WTC11 (cell line): ENCODE measurements at regions of chr1 and their contacts with region 1.

Region 1: GRCh38 chr1:5745776-5746610 is 246.2 kb downstream of the NPHP4 start:
- DNase-seq: peak; percentile 86
- ATAC-seq: peak; percentile 96
- H3K4me3 Mint-ChIP-seq: no peak overlapping the region
- H3K27ac Mint-ChIP-seq: no peak overlapping the region
- H3K4me1 Mint-ChIP-seq: peaks cover 21% of the 10 kb centered on the region
- H3K27me3 Mint-ChIP-seq: no peaks in the 10 kb centered on the region; the same call in 1 of the 2 replicates
- CTCF ChIP-seq: peak; percentile 95

Region 2: GRCh38 chr1:5514519-5515183 is 231.3 kb before region 1 on chr1:
- CTCF ChIA-PET with region 1: interaction called, 41 read pairs
- POLR2A ChIA-PET with region 1: no interaction called
- DNase-seq: peak; percentile 78
- ATAC-seq: peak; percentile 71
- H3K4me3 Mint-ChIP-seq: no peak overlapping the region
- H3K27ac Mint-ChIP-seq: no peak overlapping the region
- H3K4me1 Mint-ChIP-seq: no peaks in the 10 kb centered on the region
- H3K27me3 Mint-ChIP-seq: peaks cover 7% of the 10 kb centered on the region; the same call in 1 of the 2 replicates
- CTCF ChIP-seq: peak; percentile 99

Region 3: GRCh38 chr1:5718831-5719632 is 27.0 kb before region 1 on chr1:
- CTCF ChIA-PET with region 1: interaction called, 56 read pairs
- POLR2A ChIA-PET with region 1: no interaction called
- DNase-seq: peak; percentile 37
- ATAC-seq: peak; percentile 47
- H3K4me3 Mint-ChIP-seq: no peak overlapping the region
- H3K27ac Mint-ChIP-seq: no peak overlapping the region; the same call in 1 of the 2 replicates
- H3K4me1 Mint-ChIP-seq: peaks cover 30% of the 10 kb centered on the region
- H3K27me3 Mint-ChIP-seq: peaks cover 3% of the 10 kb centered on the region; the same call in 1 of the 2 replicates
- CTCF ChIP-seq: no peak

Region 4: DNA sequence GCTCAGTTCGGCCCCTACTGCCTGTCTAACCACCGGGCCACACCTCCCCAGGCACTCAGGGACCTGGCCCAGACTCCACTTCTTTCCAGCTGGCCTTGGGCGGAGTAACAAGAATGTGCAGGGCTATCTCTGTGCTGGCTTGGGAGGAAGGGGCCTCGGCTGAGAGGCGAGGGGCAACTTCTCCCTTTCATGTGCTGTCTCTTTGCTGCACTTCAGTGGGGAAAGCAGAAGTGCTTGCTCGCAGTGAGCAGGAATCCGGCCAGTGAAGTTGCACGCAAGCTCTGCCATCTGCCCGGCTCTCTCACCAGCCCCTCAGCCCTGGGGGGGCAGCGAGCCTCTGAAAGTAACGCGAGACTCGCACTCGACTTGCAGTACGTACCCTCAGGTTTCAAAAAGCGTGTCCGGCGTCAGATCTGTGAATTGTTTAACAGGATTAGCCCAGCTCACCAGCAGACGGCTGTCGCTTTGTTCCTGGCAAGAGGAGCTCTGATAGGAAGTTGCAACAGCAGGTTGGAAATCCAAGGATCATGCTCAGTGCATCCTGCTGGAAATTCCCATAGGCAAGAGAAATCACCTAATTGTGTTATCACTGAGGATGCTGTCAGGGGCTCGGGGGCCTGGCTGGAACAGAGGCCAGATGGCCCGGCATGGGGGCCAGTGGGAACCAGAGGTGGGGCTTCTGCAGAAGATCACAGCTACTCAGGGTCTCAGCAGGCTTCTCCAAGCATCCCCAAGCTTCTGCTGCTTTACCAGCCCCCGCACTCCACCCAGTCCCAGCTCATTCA is 25.2 kb after region 1 on chr1:
- CTCF ChIA-PET with region 1: interaction called, 33 read pairs
- POLR2A ChIA-PET with region 1: no interaction called
- DNase-seq: no peak
- ATAC-seq: no peak
- H3K4me3 Mint-ChIP-seq: no peak overlapping the region
- H3K27ac Mint-ChIP-seq: no peak overlapping the region; the same call in 1 of the 2 replicates
- H3K4me1 Mint-ChIP-seq: peaks cover 47% of the 10 kb centered on the region
- H3K27me3 Mint-ChIP-seq: no peaks in the 10 kb centered on the region; the same call in 1 of the 2 replicates
- CTCF ChIP-seq: no peak

Region 5: GRCh38 chr1:5856246-5856815 is 110.3 kb after region 1 on chr1:
- CTCF ChIA-PET with region 1: interaction called, 10 read pairs
- POLR2A ChIA-PET with region 1: no interaction called
- DNase-seq: no peak
- ATAC-seq: no peak
- H3K4me3 Mint-ChIP-seq: no peak overlapping the region
- H3K27ac Mint-ChIP-seq: peak overlapping the region; percentile 84; the same call in 1 of the 2 replicates
- H3K4me1 Mint-ChIP-seq: no peaks in the 10 kb centered on the region
- H3K27me3 Mint-ChIP-seq: no peaks in the 10 kb centered on the region
- CTCF ChIP-seq: no peak

Region 6: DNA sequence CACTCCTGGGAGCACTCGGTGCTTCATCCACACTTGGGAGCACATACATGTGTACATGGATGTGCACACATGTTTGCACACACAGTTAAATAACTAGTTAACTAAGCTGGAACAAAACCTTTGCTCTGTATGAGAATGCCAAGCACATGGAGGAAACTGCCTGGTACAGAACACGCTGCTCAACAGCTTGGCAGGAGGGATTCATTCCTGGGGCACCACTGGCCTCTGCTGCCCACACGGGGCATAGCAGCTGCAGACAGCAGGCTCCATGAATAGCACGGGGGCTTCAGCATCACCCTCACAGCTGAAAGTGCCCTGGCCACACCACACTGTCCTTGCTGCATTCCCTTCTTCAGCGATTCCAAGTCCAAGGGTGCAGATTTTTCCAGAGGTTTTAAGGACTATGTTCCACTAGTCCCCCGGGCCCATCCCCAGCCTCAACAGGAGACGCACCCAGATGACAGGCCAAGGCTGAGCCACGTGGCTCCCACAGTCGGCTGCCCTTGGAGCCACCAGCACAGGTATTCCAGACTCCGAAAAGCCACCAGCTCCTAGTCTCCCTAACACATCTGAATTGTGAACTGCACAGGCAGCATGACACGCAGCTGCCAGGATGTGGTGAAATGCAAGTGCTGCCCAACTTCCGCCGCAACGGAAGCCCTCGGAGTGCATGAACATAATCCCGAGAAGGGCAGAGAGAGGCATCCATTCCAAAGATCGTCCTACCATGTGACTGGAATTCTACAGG is 229.3 kb after region 1 on chr1:
- CTCF ChIA-PET with region 1: interaction called, 19 read pairs
- POLR2A ChIA-PET with region 1: no interaction called
- DNase-seq: peak; percentile 63
- ATAC-seq: peak; percentile 87
- H3K4me3 Mint-ChIP-seq: no peak overlapping the region
- H3K27ac Mint-ChIP-seq: no peak overlapping the region
- H3K4me1 Mint-ChIP-seq: peaks cover 12% of the 10 kb centered on the region
- H3K27me3 Mint-ChIP-seq: no peaks in the 10 kb centered on the region
- CTCF ChIP-seq: peak; percentile 50; the same call in 1 of the 2 replicates